ENCODE measurements at regions of chr4 and their contacts with region 1.

Region 1: GRCh38 chr4:186587416-186588018 is 32.1 kb upstream of the MTNR1A start:
- DNase-seq: peak; percentile 38
- H3K4me3 ChIP-seq: no peak overlapping the region
- H3K27ac ChIP-seq: no peak overlapping the region
- H3K4me1 ChIP-seq: no peaks in the 10 kb centered on the region
- H3K27me3 ChIP-seq: no peaks in the 10 kb centered on the region
- CTCF ChIP-seq: peak; percentile 66 to 72
- POLR2A ChIP-seq: no peak

Region 2: GRCh38 chr4:185865901-185866328 is 721.6 kb before region 1 on chr4:
- CTCF ChIA-PET with region 1: no interaction called
- POLR2A ChIA-PET with region 1: no interaction called
- dilution Hi-C with region 1: no loop called
- intact Hi-C with region 1: no loop called
- DNase-seq: no peak
- H3K4me3 ChIP-seq: no peak overlapping the region
- H3K27ac ChIP-seq: no peak overlapping the region
- H3K4me1 ChIP-seq: no peaks in the 10 kb centered on the region
- H3K27me3 ChIP-seq: no peaks in the 10 kb centered on the region
- CTCF ChIP-seq: no peak
- POLR2A ChIP-seq: no peak

Region 3: GRCh38 chr4:186297013-186297645 is 290.4 kb before region 1 on chr4:
- CTCF ChIA-PET with region 1: no interaction called
- POLR2A ChIA-PET with region 1: no interaction called
- dilution Hi-C with region 1: no loop called
- intact Hi-C with region 1: loop called (anchors 1 kb)
- DNase-seq: peak; percentile 51
- H3K4me3 ChIP-seq: no peak overlapping the region
- H3K27ac ChIP-seq: no peak overlapping the region
- H3K4me1 ChIP-seq: no peaks in the 10 kb centered on the region
- H3K27me3 ChIP-seq: peaks cover 0 to 2% of the 10 kb centered on the region in 2 experiments
- CTCF ChIP-seq: peak; percentile 26 to 54
- POLR2A ChIP-seq: no peak

Region 4: GRCh38 chr4:186472948-186473347 is 114.6 kb before region 1 on chr4:
- CTCF ChIA-PET with region 1: no interaction called
- POLR2A ChIA-PET with region 1: no interaction called
- dilution Hi-C with region 1: no loop called
- intact Hi-C with region 1: loop called (anchors 1 kb)
- DNase-seq: no peak
- H3K4me3 ChIP-seq: no peak overlapping the region
- H3K27ac ChIP-seq: no peak overlapping the region
- H3K4me1 ChIP-seq: no peaks in the 10 kb centered on the region
- H3K27me3 ChIP-seq: no peaks in the 10 kb centered on the region
- CTCF ChIP-seq: no peak
- POLR2A ChIP-seq: no peak

Region 5: DNA sequence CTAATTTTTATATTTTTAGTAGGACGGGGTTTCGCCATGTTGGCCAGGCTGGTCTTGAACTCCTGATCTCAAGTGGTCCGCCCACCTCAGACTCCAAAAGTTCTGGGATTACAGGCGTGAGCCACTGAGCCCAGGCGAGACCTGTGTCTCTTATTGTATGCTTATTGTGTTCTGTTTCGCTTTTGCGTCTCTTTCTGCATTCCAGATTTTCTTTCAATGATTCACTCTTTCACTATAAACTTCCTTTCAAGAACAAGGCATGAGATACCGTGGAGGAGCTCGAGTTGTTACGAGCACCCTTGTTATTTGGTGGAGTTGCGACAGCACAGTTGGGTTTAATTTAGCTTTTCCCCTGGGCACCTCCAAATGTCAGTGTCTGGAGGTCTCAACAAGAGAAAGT is 502.9 kb after region 1 on chr4:
- CTCF ChIA-PET with region 1: no interaction called
- POLR2A ChIA-PET with region 1: no interaction called
- dilution Hi-C with region 1: no loop called
- intact Hi-C with region 1: no loop called
- DNase-seq: no peak
- H3K4me3 ChIP-seq: no peak overlapping the region
- H3K27ac ChIP-seq: no peak overlapping the region
- H3K4me1 ChIP-seq: no peaks in the 10 kb centered on the region
- H3K27me3 ChIP-seq: no peaks in the 10 kb centered on the region
- CTCF ChIP-seq: no peak
- POLR2A ChIP-seq: no peak